ENCODE measurements at regions of chr15 and their contacts with region 1.

Region 1: DNA sequence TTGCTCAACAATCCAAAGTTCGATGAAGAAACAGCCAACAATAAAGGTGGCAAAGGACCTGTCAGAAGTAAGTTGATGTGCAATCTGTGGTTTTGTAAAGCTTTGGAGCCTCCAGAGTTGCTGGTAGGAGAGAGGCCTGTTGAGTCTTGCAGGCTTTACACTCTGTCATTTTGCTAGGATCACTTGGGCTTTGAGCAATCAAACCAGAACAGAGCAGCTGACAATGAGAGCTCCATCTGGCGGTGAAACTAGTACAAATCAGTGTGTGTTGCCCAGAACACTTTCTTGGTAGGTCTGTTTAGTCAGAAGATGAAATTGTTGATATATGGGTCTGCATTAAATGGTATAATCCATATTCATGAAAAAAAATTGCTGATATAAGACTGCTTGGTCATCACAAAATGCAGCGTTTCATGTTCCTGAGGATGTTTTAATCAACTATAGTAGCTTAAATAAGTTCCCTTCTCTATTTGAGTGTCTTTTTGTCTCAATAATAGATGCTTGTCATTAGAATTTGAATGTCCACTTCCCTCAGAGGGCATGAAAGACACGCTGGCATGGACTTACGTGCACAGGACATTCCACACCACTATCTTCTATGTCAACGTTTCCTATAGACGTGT is 25.7 kb downstream of the TMOD2 start:
- DNase-seq: peak; percentile 70
- H3K4me3 Mint-ChIP-seq: no peak overlapping the region
- H3K27ac Mint-ChIP-seq: no peak overlapping the region
- H3K4me1 Mint-ChIP-seq: no peaks in the 10 kb centered on the region
- H3K27me3 Mint-ChIP-seq: peaks cover 15% of the 10 kb centered on the region
- CTCF ChIP-seq: peak; percentile 61

Region 2: DNA sequence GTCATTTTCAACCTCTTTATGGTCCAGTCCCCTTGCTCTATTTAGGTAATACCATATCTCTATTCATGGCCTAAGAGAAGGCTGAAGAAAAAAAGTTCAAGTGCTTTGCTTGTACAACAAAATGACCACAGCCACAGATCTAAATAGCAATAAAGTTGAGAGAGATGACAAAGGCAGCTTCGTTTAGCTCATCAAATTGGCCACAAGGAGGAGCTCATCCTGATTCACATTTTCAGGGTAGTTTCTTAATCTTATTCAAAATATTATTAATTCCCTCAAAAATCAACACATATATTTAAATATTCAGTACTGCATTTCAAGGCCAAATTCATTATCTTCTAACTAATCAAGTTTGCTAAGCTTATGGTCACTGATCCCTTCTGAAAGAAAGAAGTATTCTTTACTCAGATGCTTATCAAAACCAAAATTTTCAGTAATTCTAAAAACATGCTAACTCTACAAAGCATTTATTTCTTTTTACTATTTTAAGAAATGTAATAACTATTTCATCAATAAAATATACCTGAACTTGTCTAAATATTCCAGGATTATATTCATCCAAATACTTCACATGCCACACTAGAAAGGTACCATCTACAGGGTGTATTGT is 240.0 kb before region 1 on chr15:
- CTCF ChIA-PET with region 1: interaction called, 11 read pairs
- intact Hi-C with region 1: no loop called
- DNase-seq: peak; percentile 4
- H3K4me3 Mint-ChIP-seq: no peak overlapping the region
- H3K27ac Mint-ChIP-seq: no peak overlapping the region
- H3K4me1 Mint-ChIP-seq: no peaks in the 10 kb centered on the region
- H3K27me3 Mint-ChIP-seq: no peaks in the 10 kb centered on the region
- CTCF ChIP-seq: no peak

Region 3: GRCh38 chr15:51585986-51586385 is 191.1 kb before region 1 on chr15:
- CTCF ChIA-PET with region 1: no interaction called
- intact Hi-C with region 1: no loop called
- DNase-seq: no peak
- H3K4me3 Mint-ChIP-seq: no peak overlapping the region
- H3K27ac Mint-ChIP-seq: no peak overlapping the region
- H3K4me1 Mint-ChIP-seq: no peaks in the 10 kb centered on the region
- H3K27me3 Mint-ChIP-seq: no peaks in the 10 kb centered on the region
- CTCF ChIP-seq: no peak

Region 4: DNA sequence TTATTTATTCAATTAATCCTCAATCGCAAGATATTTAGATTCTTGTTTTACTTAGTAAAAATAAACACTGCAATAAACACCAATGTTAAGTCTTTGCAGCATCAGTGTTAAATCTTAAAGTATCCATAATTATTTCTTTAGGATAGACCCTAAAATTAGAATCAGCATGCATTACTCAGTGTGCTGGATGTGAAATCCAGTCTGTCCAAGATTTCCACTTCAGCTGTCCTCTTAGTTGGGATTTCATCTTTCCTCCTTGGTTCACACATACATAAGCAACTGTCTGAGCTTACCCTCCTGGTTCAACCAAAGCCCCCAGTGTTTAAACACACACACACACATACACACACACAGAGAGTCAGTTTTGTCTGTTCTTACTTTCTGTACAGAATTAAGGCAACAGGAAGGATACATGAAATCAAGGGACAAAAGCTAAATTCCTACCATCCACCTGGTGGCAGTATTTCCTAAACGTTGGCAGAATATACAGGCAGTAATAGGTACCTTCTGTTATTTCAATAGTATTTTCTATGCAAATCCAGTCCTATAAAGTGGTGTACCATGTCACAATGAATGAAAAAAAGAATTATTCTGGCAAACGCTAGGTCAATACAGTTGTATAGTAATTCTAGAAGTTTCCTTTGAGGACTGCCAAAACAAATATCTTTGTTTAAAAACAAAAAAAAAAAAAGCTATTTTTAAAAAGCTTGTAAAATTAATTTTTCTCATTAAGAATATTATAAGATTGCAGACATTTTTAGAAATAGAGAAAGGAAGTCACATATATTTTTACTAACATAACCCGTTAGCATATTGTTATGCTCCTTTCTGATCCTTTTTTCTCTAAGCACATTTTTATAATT is 127.2 kb before region 1 on chr15:
- CTCF ChIA-PET with region 1: interaction called, 83 read pairs
- intact Hi-C with region 1: loop called (anchors 1 kb)
- DNase-seq: peak; percentile 59
- H3K4me3 Mint-ChIP-seq: no peak overlapping the region
- H3K27ac Mint-ChIP-seq: no peak overlapping the region
- H3K4me1 Mint-ChIP-seq: no peaks in the 10 kb centered on the region
- H3K27me3 Mint-ChIP-seq: peaks cover 30% of the 10 kb centered on the region
- CTCF ChIP-seq: peak; percentile 49

Region 5: DNA sequence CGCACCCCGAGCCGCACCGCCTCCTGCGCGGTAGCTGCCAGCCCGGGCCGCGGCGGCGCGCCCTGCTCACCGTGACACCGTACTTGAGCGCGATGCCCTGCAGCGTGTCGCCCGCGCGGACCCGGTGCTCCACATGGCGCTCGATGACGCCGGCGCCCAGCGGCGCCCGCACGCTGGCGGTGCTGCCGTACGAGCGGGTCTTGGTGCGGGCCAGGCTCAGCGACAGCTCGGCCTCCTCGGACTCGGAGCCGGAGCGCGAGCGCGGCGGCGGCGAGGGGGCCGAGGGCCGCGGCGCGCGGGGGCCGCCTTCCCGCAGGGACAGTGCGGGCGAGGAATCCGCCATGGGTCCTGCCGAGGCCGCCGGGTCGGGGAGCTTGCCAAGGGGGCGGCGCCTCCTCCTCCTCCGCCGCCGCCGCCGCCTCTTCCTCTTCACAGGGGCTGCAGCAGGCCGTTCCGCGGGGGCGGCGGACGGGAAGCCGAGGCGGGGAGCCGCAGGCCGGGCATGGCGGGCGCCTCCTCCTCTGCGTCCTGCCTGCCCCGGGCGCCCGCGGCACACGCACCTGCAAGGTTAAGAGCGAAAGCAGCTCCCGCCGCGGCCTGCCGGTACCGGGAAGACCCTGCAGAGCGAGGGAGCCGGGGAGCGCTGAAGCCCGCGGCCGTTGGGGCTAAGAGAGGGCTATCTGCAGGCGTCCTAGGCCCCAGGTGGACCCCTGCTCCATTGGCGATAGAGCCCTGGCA is 39.6 kb before region 1 on chr15 and contains the start of gene LYSMD2:
- CTCF ChIA-PET with region 1: interaction called, 16 read pairs
- intact Hi-C with region 1: no loop called
- DNase-seq: peak; percentile 67
- H3K4me3 Mint-ChIP-seq: peak within 1 kb of the TSS; percentile 81
- H3K27ac Mint-ChIP-seq: peak within 1 kb of the TSS; percentile 3
- H3K4me1 Mint-ChIP-seq: peaks cover 26% of the 10 kb centered on the region
- H3K27me3 Mint-ChIP-seq: no peaks in the 10 kb centered on the region
- CTCF ChIP-seq: no peak
- total RNA-seq, gene LYSMD2: 14.3 TPM in 2 replicates

Region 6: GRCh38 chr15:51842852-51843737 is 66.0 kb after region 1 on chr15:
- CTCF ChIA-PET with region 1: no interaction called
- intact Hi-C with region 1: no loop called
- DNase-seq: peak; percentile 36
- H3K4me3 Mint-ChIP-seq: peak overlapping the region; percentile 45
- H3K27ac Mint-ChIP-seq: peak overlapping the region; percentile 82
- H3K4me1 Mint-ChIP-seq: peaks cover 72% of the 10 kb centered on the region
- H3K27me3 Mint-ChIP-seq: no peaks in the 10 kb centered on the region
- CTCF ChIP-seq: no peak

Region 7: GRCh38 chr15:51982013-51982769 is 205.1 kb after region 1 on chr15:
- CTCF ChIA-PET with region 1: no interaction called
- intact Hi-C with region 1: no loop called
- DNase-seq: peak; percentile 13
- H3K4me3 Mint-ChIP-seq: peak overlapping the region; percentile 28
- H3K27ac Mint-ChIP-seq: no peak overlapping the region
- H3K4me1 Mint-ChIP-seq: peaks cover 14% of the 10 kb centered on the region
- H3K27me3 Mint-ChIP-seq: no peaks in the 10 kb centered on the region
- CTCF ChIP-seq: peak; percentile 48